K562 (cell line): ENCODE measurements at regions of chr2 and their contacts with region 1.

Region 1: DNA sequence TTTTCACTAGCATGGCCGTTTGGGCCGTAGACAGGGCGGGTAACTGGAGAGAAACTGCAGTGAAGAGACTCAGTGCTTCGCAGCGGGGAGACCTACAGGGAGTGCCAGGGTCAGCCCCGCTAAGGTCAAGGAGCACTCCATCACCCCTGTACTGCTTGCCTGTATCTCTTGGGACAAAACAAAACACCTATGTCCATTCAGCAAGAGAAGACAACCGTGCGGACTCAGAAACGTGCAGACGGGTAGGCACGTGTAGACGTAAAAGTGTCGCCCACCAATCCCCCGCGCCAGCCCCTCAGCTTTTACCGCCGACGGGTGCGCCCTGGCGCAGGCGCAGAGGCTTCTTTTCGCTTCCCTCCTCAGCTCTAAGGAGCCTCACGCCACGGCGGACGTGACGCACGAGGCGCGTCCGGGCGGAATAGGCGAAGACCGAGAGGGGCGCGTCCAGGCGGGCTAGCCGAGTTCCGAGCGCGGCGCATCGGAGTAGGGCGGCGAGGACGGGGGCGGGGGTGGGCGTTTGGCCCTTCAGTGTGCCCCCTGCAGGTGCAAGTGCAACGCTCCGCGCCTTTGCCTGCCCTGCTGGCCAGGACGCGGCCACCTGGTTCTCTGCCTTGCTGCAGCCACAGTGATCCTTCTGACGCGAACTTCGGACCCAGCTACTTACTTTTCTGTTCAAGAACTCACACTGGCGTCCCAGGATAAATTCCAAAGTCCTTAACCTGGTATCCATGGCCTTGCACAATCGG is 3.3 kb upstream of the SOS1 start:
- DNase-seq: peak; percentile 88 to 99 (median 89)
- ATAC-seq: peak; percentile 82
- H3K4me3 ChIP-seq: peak overlapping the region; percentile 56
- H3K27ac ChIP-seq: peak overlapping the region; percentile 85
- H3K4me1 ChIP-seq: peaks cover 28% of the 10 kb centered on the region in 2 experiments; a peak in 4 of 5 replicates
- H3K27me3 ChIP-seq: no peaks in the 10 kb centered on the region
- CTCF ChIP-seq: peak; percentile 60 to 89 (median 65)
- EP300 ChIP-seq: peak; percentile 50
- POLR2A ChIP-seq: peak; percentile 84
- RAD21 ChIP-seq: 0 out of 4 replicates have a peak, but pooled peaks have one; percentile 14 to 18

Region 2: DNA sequence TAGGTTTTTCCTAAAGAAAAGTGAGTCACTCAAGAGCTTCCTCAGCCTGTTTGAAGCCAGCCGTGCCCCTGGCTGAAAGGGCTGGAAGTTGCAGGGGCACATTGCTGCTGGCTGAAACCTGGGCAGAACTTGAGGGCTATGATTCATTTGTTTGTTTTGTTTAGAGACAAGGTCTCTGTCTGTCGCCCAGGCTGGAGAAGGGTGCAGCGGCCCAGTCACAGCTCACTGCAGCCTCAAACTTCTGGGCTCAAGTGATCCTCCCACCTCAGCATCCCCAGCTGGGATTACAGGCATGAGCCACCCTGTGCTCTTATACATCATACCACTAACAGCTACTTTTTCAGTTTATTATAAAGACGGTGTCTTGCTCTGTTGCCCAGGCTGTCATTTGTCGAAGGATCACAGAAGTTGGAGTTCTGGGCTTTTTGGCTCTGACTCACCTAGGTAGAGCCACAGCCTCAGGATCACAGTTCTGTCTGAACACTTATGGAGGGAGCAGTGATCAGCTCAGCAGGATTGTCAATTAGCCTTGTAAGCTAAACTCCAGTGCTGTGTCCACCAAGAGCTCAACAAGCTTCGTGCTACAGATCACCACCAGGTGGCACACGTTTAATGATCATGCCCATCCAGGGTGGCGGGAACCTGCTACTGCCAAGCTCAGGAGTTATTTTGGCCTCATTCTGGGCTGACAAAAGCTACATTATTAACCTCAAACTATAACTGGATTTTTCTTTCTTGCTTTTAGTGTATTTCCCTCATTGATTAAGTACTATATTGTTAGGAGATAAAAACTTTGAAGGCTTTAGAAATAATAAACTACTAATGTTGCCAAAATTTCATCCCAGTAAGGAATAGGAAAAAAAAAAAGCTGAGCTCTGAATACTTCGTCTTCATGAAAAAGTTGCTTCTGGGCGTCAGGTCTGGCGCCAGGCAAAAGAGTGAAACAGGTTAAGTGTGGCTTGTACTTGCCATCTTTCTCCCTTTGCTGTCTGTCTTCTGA is 176.6 kb before region 1 on chr2:
- CTCF ChIA-PET with region 1: no interaction called
- POLR2A ChIA-PET with region 1: no interaction called
- in situ Hi-C with region 1: no loop called
- intact Hi-C with region 1: loop called (anchors 5 kb)
- DNase-seq: peak; percentile 40 to 73 (median 58)
- ATAC-seq: peak; percentile 86
- H3K4me3 ChIP-seq: no peak overlapping the region
- H3K27ac ChIP-seq: no peak overlapping the region
- H3K4me1 ChIP-seq: peaks cover 3 to 10% of the 10 kb centered on the region in 2 experiments; a peak in 3 of 5 replicates
- H3K27me3 ChIP-seq: no peaks in the 10 kb centered on the region
- CTCF ChIP-seq: peak; percentile 62 to 67 (median 65)
- EP300 ChIP-seq: no peak
- POLR2A ChIP-seq: no peak
- RAD21 ChIP-seq: peak; percentile 41 to 76

Region 3: DNA sequence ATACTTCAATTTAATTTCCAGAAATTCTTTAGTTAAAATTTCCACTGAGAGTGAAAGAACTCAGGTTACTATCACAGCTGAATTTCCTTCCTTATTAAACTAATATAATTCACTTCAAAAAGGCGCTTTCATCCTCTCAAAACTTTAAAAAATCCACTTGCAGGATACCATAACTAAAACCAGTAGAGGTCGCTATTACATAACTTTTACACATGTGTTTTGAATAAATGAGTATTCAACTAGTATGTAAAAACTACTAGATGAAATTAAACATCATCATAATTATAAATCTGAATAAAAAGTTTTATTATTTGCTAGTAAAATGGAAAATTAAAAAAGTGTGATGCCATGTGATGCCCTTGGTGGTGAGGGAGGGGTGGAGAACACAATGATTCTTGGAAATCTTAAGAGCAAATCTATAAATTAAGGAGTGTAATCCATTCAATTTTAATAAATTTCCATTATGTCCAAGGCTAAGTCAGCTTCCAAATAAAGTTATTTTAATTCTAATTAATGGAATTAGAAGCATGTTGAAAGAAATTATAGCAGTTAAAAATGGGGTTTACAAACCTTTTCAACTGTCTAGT is 64.7 kb before region 1 on chr2:
- CTCF ChIA-PET with region 1: interaction called, 3 read pairs
- POLR2A ChIA-PET with region 1: no interaction called
- in situ Hi-C with region 1: no loop called
- intact Hi-C with region 1: loop called (anchors 1 kb)
- DNase-seq: peak in 3 of 4 experiments; percentile 13 to 48 (median 28)
- ATAC-seq: peak; percentile 70
- H3K4me3 ChIP-seq: no peak overlapping the region
- H3K27ac ChIP-seq: no peak overlapping the region
- H3K4me1 ChIP-seq: no peaks in the 10 kb centered on the region
- H3K27me3 ChIP-seq: no peaks in the 10 kb centered on the region
- CTCF ChIP-seq: peak; percentile 50 to 87 (median 52); a peak in 4 of 6 replicates
- EP300 ChIP-seq: no peak
- POLR2A ChIP-seq: no peak
- RAD21 ChIP-seq: peak; percentile 85 to 87

Region 4: GRCh38 chr2:39141331-39142271 is 17.4 kb after region 1 on chr2:
- CTCF ChIA-PET with region 1: no interaction called
- POLR2A ChIA-PET with region 1: interaction called, 12 read pairs
- in situ Hi-C with region 1: no loop called
- intact Hi-C with region 1: loop called (anchors 1 kb)
- DNase-seq: peak; percentile 39 to 87 (median 58)
- ATAC-seq: peak; percentile 89
- H3K4me3 ChIP-seq: no peak overlapping the region
- H3K27ac ChIP-seq: peak overlapping the region; percentile 54; the same call in 2 of the 3 replicates
- H3K4me1 ChIP-seq: peaks cover 12 to 30% of the 10 kb centered on the region in 2 experiments
- H3K27me3 ChIP-seq: no peaks in the 10 kb centered on the region
- CTCF ChIP-seq: no peak
- EP300 ChIP-seq: peak; percentile 88
- POLR2A ChIP-seq: no peak
- RAD21 ChIP-seq: no peak

Region 5: GRCh38 chr2:39179974-39180970 is 56.1 kb after region 1 on chr2:
- CTCF ChIA-PET with region 1: no interaction called
- POLR2A ChIA-PET with region 1: no interaction called
- in situ Hi-C with region 1: no loop called
- intact Hi-C with region 1: no loop called
- DNase-seq: no peak
- ATAC-seq: peak; percentile 20; the same call in 1 of the 3 replicates
- H3K4me3 ChIP-seq: no peak overlapping the region
- H3K27ac ChIP-seq: no peak overlapping the region
- H3K4me1 ChIP-seq: no peaks in the 10 kb centered on the region
- H3K27me3 ChIP-seq: no peaks in the 10 kb centered on the region
- CTCF ChIP-seq: no peak
- EP300 ChIP-seq: no peak
- POLR2A ChIP-seq: no peak
- RAD21 ChIP-seq: no peak

Region 6: GRCh38 chr2:39289609-39290008 is 165.4 kb after region 1 on chr2:
- CTCF ChIA-PET with region 1: no interaction called
- POLR2A ChIA-PET with region 1: no interaction called
- in situ Hi-C with region 1: no loop called
- intact Hi-C with region 1: no loop called
- DNase-seq: no peak
- ATAC-seq: no peak
- H3K4me3 ChIP-seq: no peak overlapping the region
- H3K27ac ChIP-seq: no peak overlapping the region
- H3K4me1 ChIP-seq: no peaks in the 10 kb centered on the region
- H3K27me3 ChIP-seq: no peaks in the 10 kb centered on the region
- CTCF ChIP-seq: no peak
- EP300 ChIP-seq: no peak
- POLR2A ChIP-seq: no peak
- RAD21 ChIP-seq: no peak

Region 7: DNA sequence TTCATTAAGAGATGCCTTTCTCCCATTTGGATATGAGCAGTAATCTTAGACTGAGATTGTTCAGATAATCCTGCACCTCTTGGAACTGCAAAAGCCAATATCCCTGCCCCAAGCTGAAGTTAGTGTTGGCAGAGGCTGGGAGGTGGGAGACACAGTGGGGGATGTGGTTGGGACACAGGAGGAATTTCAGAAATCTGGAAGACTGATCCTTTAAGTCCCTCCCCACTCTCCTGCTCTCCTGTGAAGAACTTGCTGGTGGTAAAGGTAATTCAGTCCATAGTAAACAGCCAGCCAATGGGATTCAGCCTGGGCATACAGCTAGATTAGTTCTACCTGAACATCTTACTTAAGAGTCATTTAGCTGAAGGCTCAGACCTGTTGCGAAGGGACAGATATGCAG is 491.5 kb after region 1 on chr2:
- CTCF ChIA-PET with region 1: no interaction called
- POLR2A ChIA-PET with region 1: no interaction called
- in situ Hi-C with region 1: no loop called
- intact Hi-C with region 1: no loop called
- DNase-seq: no peak
- ATAC-seq: no peak
- H3K4me3 ChIP-seq: no peak overlapping the region
- H3K27ac ChIP-seq: no peak overlapping the region
- H3K4me1 ChIP-seq: peaks cover 0 to 4% of the 10 kb centered on the region in 2 experiments; a peak in 3 of 5 replicates
- H3K27me3 ChIP-seq: peaks cover 0 to 4% of the 10 kb centered on the region in 2 experiments; a peak in 2 of 5 replicates
- CTCF ChIP-seq: no peak
- EP300 ChIP-seq: no peak
- POLR2A ChIP-seq: no peak
- RAD21 ChIP-seq: no peak

Region 8: GRCh38 chr2:39631718-39632117 is 507.5 kb after region 1 on chr2:
- CTCF ChIA-PET with region 1: no interaction called
- POLR2A ChIA-PET with region 1: no interaction called
- in situ Hi-C with region 1: no loop called
- intact Hi-C with region 1: no loop called
- DNase-seq: peak in 2 of 4 experiments; percentile 37 to 64
- ATAC-seq: peak; percentile 89
- H3K4me3 ChIP-seq: no peak overlapping the region
- H3K27ac ChIP-seq: no peak overlapping the region
- H3K4me1 ChIP-seq: peaks cover 0 to 6% of the 10 kb centered on the region in 2 experiments; a peak in 1 of 5 replicates
- H3K27me3 ChIP-seq: peaks cover 3 to 10% of the 10 kb centered on the region in 2 experiments; a peak in 4 of 5 replicates
- CTCF ChIP-seq: no peak
- EP300 ChIP-seq: peak; percentile 47
- POLR2A ChIP-seq: no peak
- RAD21 ChIP-seq: no peak